ENCODE measurements at regions of chr11 and their contacts with region 1.

Region 1: GRCh38 chr11:65615229-65615941 is at the start of gene PCNX3:
- DNase-seq: peak; percentile 100
- ATAC-seq: peak; percentile 91
- H3K4me3 Mint-ChIP-seq: peak within 1 kb of the TSS; percentile 98
- H3K27ac Mint-ChIP-seq: peak within 1 kb of the TSS; percentile 97
- H3K4me1 Mint-ChIP-seq: peaks cover 44% of the 10 kb centered on the region
- H3K27me3 Mint-ChIP-seq: no peaks in the 10 kb centered on the region
- total RNA-seq, gene PCNX3: 50.1 to 54.8 TPM

Region 2: DNA sequence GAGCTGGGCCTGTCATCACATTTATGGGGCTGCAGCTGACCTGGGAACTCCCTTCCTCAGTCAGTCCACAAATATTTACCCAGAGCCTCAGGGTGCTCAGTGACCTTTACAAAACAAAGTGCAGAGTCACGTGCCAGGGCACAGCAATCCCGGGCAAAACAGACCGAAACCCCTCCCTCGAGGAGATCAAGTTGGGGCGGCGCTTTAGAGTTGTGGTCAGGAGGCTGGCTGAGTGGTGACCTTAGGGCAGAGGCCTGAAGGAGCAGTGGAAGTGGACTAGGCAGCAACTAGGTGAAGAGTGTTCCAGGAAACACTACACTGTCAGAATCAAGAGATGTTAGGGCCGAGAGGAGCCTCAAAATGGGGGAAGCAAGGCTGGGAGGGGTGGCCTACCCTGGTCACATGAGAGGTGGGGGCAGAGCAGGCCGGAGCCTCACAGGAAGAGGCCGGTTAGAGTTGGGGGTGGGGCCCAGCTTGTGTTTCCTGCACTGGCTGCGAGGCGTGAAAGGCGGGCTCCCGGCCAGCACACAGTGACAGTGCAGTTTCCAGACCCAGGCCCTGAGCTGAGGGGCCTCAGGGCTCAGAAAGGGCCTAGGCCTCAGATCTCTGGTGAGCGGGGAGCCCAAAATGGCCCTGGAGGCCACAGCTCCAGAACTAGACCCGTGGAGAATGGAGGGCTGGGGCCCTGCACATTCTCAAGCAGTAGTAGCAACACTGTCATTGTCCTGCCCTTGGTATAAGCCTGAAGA is 196.5 kb before region 1 on chr11:
- CTCF ChIA-PET with region 1: interaction called, 3 read pairs
- POLR2A ChIA-PET with region 1: interaction called, 12 read pairs
- DNase-seq: peak; percentile 95
- ATAC-seq: peak; percentile 29
- H3K4me3 Mint-ChIP-seq: peak overlapping the region; percentile 87
- H3K27ac Mint-ChIP-seq: peak overlapping the region; percentile 100
- H3K4me1 Mint-ChIP-seq: peaks cover 60% of the 10 kb centered on the region
- H3K27me3 Mint-ChIP-seq: peaks cover 2% of the 10 kb centered on the region

Region 3: GRCh38 chr11:65588199-65589054 is 27.0 kb before region 1 on chr11:
- CTCF ChIA-PET with region 1: interaction called, 24 read pairs
- POLR2A ChIA-PET with region 1: interaction called, 6 read pairs
- DNase-seq: peak; percentile 86
- ATAC-seq: peak; percentile 89
- H3K4me3 Mint-ChIP-seq: peak overlapping the region; percentile 55
- H3K27ac Mint-ChIP-seq: peak overlapping the region; percentile 94
- H3K4me1 Mint-ChIP-seq: peaks cover 48% of the 10 kb centered on the region
- H3K27me3 Mint-ChIP-seq: no peaks in the 10 kb centered on the region

Region 4: DNA sequence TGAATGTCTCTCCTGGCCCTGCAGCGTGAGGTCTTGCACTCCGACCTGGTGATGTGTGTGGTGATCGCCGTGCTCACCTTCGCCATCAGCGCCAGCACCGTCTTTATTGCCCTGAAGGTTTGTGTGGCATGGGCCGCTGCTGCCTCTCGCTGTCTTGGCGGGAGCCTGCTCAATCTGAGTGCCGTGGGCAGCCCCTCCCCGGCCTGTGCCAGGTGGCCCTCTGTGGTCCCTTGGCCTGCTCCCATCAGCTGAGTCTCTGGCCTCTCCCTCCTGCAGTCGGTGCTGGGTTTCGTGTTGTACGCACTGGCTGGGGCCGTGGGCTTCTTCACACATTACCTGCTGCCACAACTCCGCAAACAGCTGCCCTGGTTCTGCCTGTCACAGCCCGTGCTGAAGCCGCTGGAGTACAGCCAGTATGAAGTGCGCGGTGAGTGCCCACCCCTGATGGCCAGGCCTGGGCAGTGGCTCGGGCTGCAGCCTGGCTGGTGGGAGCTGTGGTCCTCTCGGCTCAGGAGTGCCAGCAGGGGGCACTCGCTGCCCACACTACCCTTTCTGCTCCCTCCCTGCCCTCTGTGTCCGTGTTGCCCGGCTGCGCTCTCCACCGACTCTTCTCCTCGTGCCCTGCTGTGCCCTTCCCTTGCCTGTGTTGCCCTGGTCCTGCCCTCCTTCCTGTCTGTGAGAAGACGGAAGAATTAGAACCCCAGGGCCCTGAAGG is 10.4 kb after region 1 on chr11:
- CTCF ChIA-PET with region 1: interaction called, 10 read pairs
- POLR2A ChIA-PET with region 1: interaction called, 3 read pairs
- DNase-seq: peak; percentile 62
- ATAC-seq: peak; percentile 79
- H3K4me3 Mint-ChIP-seq: no peak overlapping the region
- H3K27ac Mint-ChIP-seq: no peak overlapping the region
- H3K4me1 Mint-ChIP-seq: peaks cover 7% of the 10 kb centered on the region
- H3K27me3 Mint-ChIP-seq: no peaks in the 10 kb centered on the region

Region 5: DNA sequence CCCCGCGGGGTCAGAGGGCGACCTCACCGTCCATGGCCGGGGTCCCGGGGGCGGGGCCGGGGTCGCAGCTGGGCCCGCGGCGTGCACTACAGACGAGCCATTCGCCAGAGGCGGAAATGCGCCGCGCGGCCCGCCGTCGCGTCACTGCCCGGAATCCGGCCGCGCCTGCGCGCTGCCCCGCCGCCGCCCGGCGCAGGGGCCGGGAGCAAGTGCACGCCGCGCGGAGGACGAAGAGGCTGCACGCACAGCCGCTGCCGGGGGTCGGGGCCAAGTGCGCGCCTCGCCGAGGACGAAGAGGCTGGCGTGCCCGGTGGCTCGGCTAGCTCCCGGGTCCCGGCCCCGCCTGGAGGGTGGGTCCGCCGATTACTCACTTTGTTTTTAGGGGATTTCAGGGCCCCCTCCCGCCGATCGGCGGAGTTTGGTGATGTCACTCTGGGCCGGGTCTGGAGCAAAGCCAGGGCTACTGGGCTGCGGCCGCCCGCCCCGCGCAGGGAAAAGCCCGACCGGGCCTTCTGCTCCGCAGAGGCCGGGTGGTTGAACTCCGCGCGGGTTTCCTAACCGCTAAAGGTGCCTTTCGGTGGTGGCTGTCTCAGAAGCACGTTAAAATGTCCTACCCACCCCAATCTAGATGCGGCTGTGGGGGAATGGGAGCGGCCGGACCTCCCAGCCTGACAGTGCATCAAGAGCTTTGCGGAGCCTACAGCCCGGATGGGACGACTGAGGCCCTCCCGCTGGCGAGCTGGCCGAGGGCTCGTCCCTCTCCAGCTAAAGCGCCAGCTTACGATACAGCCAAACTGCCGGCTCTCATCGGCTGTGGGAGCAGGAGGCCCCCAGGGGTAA is 47.6 kb after region 1 on chr11 and contains the start of gene RELA:
- CTCF ChIA-PET with region 1: interaction called, 3 read pairs
- POLR2A ChIA-PET with region 1: interaction called, 11 read pairs
- DNase-seq: peak; percentile 91
- ATAC-seq: peak; percentile 84
- H3K4me3 Mint-ChIP-seq: peak within 1 kb of the TSS; percentile 81
- H3K27ac Mint-ChIP-seq: peak within 1 kb of the TSS; percentile 91
- H3K4me1 Mint-ChIP-seq: peaks cover 30% of the 10 kb centered on the region
- H3K27me3 Mint-ChIP-seq: no peaks in the 10 kb centered on the region
- total RNA-seq, gene RELA: 72.5 to 82.4 TPM